AG04449 (cell line): ENCODE measurements at regions of chr6 and their contacts with region 1.

Region 1: GRCh38 chr6:6057424-6058053 is 50.8 kb upstream of the NRN1 start:
- DNase-seq: peak; percentile 21
- H3K4me3 ChIP-seq: no peak overlapping the region
- CTCF ChIP-seq: peak; percentile 49

Region 2: DNA sequence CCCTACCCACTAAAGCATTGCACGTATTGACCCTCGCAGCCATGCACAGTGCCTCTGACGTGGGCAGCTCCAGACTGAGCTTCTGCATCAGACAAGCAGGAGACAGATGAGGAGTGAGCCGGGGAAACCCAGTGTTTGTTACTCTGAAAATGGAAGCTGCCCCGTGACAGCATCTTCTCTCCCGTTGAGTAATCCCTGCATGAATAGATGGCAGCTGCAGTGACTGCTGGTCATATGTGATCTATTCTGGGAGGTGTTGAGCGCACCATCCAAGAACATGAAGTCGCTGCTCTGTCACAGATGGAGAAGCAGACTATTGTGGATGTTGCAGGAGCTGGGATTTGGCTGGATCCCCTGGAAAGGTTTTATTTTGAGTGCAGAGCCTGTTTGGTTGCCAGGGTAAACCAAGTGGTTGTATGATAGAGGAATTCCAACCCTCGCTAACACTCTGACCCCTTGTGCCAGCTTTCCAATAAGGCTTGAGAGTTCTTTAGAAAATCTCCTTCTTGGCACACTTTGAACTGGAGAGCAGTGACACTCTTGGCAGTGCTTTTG is 293.1 kb before region 1 on chr6:
- CTCF ChIA-PET with region 1: no interaction called
- POLR2A ChIA-PET with region 1: no interaction called
- DNase-seq: no peak
- H3K4me3 ChIP-seq: no peak overlapping the region
- CTCF ChIP-seq: no peak

Region 3: DNA sequence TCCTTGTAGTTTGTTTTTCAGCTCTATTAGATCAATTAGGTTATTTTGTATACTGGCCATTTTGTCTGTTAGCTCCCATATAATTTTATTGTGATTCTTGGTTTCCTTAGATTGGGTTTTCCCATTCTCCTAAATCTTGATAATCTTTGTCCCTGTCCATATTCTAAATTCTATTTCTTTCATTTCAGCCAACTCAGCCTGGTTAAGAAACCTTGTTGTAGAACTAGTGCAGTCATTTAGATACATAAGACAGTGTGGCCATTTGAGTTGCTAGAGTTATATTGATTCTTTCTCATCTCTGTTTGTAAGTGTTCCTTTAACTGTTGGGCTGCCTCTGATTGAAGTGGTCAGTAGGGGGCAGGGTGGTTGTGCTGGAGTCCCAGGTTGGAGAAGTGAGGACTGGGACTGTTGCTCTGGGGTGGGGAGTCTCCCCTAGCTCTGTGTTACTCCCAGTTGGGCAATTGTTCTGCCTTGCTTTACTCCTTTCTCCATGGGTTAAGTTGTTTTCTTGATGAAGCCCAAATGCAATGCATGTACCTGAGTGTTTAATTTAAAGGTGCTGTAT is 48.0 kb after region 1 on chr6:
- CTCF ChIA-PET with region 1: no interaction called
- POLR2A ChIA-PET with region 1: no interaction called
- DNase-seq: no peak
- H3K4me3 ChIP-seq: no peak overlapping the region
- CTCF ChIP-seq: no peak

Region 4: DNA sequence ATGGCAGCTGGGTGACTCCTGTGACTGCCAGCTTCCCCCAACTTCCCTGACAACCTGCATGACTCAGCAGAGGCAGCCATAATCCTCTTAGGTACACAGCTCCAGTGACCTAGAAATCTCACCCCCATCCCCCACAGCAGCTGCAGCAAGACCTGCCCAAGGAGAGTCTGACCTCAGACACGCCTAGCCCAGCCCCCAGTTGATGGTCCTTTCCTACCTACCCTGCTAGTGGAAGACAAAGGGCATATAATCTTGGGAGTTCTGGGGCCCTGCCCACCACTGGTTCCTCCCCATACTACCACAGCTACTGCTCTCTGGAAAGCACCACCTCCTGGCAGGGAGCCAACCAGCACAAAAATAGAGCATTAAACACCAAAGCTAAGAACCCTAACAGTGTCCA is 172.7 kb after region 1 on chr6:
- CTCF ChIA-PET with region 1: no interaction called
- POLR2A ChIA-PET with region 1: no interaction called
- DNase-seq: no peak
- H3K4me3 ChIP-seq: no peak overlapping the region
- CTCF ChIP-seq: no peak

Region 5: GRCh38 chr6:6438286-6438685 is 380.7 kb after region 1 on chr6:
- CTCF ChIA-PET with region 1: no interaction called
- POLR2A ChIA-PET with region 1: no interaction called
- DNase-seq: no peak
- H3K4me3 ChIP-seq: no peak overlapping the region
- CTCF ChIP-seq: no peak

Region 6: DNA sequence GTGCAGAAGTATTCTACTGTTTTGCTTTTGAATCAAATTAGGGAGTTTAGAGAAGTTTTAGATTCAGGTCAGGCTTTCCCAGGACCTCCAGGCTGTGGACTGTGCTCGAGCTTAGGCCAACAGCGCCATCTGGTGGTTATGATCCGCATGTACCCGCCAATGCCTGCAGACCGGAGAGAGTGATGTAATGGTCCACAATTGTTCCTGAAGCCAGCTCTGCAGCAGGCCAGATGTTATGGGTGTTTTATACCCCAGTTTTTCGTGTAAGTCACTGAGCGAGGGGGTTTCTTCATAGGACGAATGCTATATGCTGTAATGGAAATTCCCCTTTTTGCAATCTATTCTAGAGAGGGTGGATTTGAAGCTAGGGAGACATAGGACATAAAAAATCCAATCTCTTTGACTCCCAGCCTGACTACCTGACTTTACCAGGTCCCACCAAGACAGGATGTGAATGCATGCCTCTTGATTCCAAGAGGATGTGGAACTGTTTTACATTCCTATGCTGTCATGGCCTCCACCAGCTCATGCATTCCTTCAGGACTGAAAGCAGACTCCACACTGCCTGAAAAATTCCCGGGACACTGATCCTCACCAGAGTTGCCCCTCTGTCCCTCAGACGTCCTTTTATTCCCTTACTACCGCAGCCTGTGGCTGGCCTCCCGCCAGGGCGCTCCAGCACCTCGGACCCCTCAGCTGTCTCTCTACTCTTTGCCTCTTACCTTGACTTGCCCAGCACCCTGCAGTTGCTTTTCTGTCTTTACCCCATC is 489.8 kb after region 1 on chr6:
- CTCF ChIA-PET with region 1: interaction called, 39 read pairs
- POLR2A ChIA-PET with region 1: no interaction called
- DNase-seq: peak; percentile 21
- H3K4me3 ChIP-seq: peak overlapping the region; percentile 40
- CTCF ChIP-seq: peak; percentile 91